Activated T-helper 1 cell treated with anti-CD3 and anti-CD28 coated beads, Interleukin-12 subunit alpha, Interleukin-12 subunit beta, Interleukin-2, Interleukin-4 antibody, amounts not matched to agents 30 ng/mL and 10 ng/mL and 1 ng/mL, durations not matched to agents 14 hours and 24 hours and 36 hours (primary cell): ENCODE measurements at regions of chr21 and their contacts with region 1.

Region 1: GRCh38 chr21:15064576-15065391 is at the start of gene NRIP1:
- DNase-seq: peak; percentile 80
- H3K4me3 Mint-ChIP-seq: peak within 1 kb of the TSS; percentile 93
- H3K27ac Mint-ChIP-seq: peak within 1 kb of the TSS; percentile 88
- H3K4me1 Mint-ChIP-seq: peaks cover 52% of the 10 kb centered on the region
- H3K27me3 Mint-ChIP-seq: peaks cover 25% of the 10 kb centered on the region
- total RNA-seq, gene NRIP1: 11.4 and 11.7 TPM in 2 replicates

Region 2: GRCh38 chr21:14382835-14383594 is 681.8 kb before region 1 on chr21 and contains the start of gene HSPA13:
- intact Hi-C with region 1: loop called (anchors 1 kb)
- DNase-seq: peak; percentile 99
- H3K4me3 Mint-ChIP-seq: peak within 1 kb of the TSS; percentile 100
- H3K27ac Mint-ChIP-seq: peak within 1 kb of the TSS; percentile 100
- H3K4me1 Mint-ChIP-seq: peaks cover 52% of the 10 kb centered on the region
- H3K27me3 Mint-ChIP-seq: peaks cover 2% of the 10 kb centered on the region
- total RNA-seq, gene HSPA13: 43.6 and 50.4 TPM in 2 replicates

Region 3: GRCh38 chr21:14864211-14865021 is 200.4 kb before region 1 on chr21:
- intact Hi-C with region 1: loop called (anchors 10 kb)
- DNase-seq: peak; percentile 16
- H3K4me3 Mint-ChIP-seq: no peak overlapping the region
- H3K27ac Mint-ChIP-seq: no peak overlapping the region
- H3K4me1 Mint-ChIP-seq: peaks cover 5% of the 10 kb centered on the region
- H3K27me3 Mint-ChIP-seq: no peaks in the 10 kb centered on the region

Region 4: DNA sequence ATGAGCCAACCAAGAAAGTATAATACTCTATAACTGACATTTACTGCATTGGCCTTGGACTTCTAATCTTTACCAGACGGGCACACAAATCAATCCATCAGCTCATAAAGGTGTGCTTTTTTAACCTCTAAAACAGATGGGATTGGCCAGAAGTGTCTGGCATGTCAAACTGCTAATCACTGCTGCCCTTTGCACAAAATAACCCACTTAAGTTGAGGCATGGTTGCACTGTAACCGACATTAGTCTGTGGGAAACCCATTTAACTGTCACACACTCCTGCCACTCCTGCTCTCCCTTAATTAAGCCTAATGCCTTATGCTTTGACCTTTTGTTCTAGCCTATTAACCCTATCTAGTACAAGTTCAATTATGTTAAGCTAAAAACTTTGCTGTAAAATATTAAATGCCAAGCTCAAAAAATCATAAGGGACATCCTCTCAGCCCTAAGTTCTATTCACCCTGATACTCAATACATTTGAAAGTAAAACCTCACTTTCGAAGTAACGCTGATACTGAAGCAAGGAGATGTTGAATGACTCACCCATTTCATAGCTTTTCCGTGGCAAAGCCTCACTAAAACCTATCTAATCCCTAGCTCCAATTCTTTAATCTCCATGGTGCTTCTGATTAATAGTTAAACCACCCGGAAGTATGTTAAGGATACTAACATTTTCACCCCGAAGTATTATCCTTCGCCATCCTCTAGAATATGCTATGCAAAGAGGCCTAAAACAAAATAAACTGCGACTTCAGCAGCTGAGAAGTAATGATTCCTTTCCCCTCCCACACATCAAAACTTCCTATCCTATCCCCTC is 12.9 kb before region 1 on chr21:
- intact Hi-C with region 1: loop called (anchors 1 kb)
- DNase-seq: no peak
- H3K4me3 Mint-ChIP-seq: peak overlapping the region; percentile 61
- H3K27ac Mint-ChIP-seq: peak overlapping the region; percentile 70
- H3K4me1 Mint-ChIP-seq: peaks cover 69% of the 10 kb centered on the region
- H3K27me3 Mint-ChIP-seq: no peaks in the 10 kb centered on the region

Region 5: DNA sequence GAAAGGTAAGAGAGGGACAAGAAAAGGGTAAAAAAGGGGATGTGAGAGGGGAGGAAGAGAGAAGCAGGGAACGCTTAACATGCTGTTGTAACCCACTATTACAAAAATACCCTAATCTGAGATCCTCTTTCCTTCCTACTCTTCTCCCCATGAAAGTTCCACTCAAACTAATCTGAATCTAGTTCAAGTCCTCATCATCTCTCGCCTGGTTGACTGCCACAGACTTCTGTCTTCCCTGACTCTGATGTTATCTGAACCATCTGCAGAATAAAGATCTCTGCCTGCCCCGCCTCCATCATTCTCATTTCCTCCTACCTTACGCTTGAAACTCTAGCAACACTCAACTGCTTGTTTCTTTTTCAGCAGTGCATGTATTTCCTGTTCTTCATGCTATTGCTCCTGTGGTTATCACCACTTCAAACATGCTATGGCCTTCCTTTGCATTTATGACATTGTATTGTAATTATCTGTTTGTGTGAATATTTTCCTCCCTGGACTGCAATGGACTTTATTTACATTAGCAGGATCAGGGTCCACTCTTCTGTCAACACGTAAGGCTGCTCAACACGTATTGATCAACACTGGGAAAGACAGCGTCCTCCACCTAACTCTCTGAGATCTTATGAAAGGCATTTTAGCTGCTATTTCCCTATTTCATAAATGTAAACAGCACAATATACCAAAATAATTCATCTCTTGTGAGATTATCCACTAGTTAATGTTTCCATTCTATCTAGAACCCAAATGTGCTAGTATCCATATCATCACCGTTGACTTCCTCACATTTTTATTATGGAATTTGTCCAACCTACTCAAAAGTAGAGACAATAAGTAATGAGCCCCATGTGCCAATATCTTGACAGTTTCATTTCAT is 449.5 kb after region 1 on chr21:
- intact Hi-C with region 1: loop called (anchors 10 kb)
- DNase-seq: peak; percentile 57
- H3K4me3 Mint-ChIP-seq: peak overlapping the region; percentile 21
- H3K27ac Mint-ChIP-seq: peak overlapping the region; percentile 69
- H3K4me1 Mint-ChIP-seq: peaks cover 21% of the 10 kb centered on the region
- H3K27me3 Mint-ChIP-seq: no peaks in the 10 kb centered on the region